ENCODE measurements at regions of chr10 and their contacts with region 1.

Region 1: DNA sequence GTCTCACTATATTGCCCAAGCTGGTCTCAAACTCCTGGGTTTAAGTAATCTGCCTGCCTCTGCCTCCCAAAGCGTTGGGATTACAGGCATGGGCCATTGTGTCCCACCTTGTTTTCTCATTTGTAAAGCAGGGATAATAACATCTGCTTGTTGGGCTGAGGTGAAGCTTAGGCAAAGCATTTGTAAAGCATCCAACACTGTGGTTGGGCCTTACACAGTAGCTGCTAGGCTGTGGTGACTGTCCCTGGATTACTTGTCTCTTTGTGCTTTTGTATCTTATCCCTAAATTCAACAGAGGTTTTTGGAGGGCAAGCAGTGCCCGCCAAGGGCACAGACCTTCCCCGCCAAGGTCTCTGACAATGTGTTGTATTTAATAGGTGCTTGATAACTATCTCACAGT is 14.3 kb downstream of the HKDC1 start:
- DNase-seq: no peak
- ATAC-seq: no peak
- H3K4me3 ChIP-seq: no peak overlapping the region
- H3K27ac ChIP-seq: no peak overlapping the region
- H3K4me1 ChIP-seq: peaks cover under 1% of the 10 kb centered on the region
- H3K27me3 ChIP-seq: no peaks in the 10 kb centered on the region
- CTCF ChIP-seq: no peak

Region 2: GRCh38 chr10:69018613-69019012 is 215.8 kb before region 1 on chr10:
- intact Hi-C with region 1: no loop called
- DNase-seq: no peak
- ATAC-seq: no peak
- H3K4me3 ChIP-seq: no peak overlapping the region
- H3K27ac ChIP-seq: no peak overlapping the region
- H3K4me1 ChIP-seq: no peaks in the 10 kb centered on the region
- H3K27me3 ChIP-seq: no peaks in the 10 kb centered on the region
- CTCF ChIP-seq: no peak

Region 3: DNA sequence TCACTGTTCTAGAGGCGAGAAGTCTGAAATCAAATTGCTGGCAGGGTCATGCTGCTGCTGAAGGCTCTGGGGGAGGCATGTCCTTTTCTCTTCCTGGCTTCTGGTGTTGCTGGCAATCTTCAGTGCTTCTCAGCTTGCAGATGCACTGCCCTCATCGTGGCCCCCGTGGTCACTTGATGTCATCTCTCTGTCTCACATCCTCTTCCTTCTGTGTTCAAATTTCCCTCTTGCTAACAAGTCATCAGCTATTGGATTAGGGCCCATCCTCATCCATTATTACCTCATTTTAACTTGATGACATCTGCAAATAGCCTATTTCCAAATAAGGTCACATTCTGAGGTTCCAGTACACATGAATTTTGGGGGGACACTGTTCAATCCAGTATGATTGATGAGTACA is 183.1 kb before region 1 on chr10:
- intact Hi-C with region 1: no loop called
- DNase-seq: peak; percentile 71
- ATAC-seq: peak; percentile 49
- H3K4me3 ChIP-seq: no peak overlapping the region
- H3K27ac ChIP-seq: no peak overlapping the region
- H3K4me1 ChIP-seq: peaks cover 33% of the 10 kb centered on the region
- H3K27me3 ChIP-seq: no peaks in the 10 kb centered on the region
- CTCF ChIP-seq: no peak

Region 4: DNA sequence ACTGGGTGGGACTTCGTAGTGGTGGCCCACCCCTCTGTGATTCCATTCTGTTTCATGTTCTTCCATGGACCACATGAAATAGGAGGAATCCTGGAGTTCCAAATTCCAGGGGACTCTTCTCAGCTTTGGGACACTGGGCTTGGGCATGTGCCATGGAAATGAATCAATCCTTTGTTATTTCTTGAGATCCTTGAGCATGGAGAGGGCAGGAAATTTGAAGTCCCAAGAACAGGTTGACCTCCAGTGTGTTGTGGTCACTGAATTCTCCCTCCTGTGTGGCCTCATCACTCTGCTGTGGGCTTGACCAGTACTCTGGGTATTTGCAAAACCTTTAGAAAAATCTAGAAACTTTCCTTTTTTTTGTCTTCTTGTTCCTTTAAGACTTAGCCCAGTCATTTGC is 159.6 kb after region 1 on chr10:
- intact Hi-C with region 1: loop called (anchors 2 kb)
- DNase-seq: no peak
- ATAC-seq: no peak
- H3K4me3 ChIP-seq: no peak overlapping the region
- H3K27ac ChIP-seq: no peak overlapping the region
- H3K4me1 ChIP-seq: peaks cover 3% of the 10 kb centered on the region
- H3K27me3 ChIP-seq: no peaks in the 10 kb centered on the region
- CTCF ChIP-seq: no peak